Heart left ventricle (tissue), 16 donors: ENCODE measurements at regions of chr17 and their contacts with region 1.

Region 1: DNA sequence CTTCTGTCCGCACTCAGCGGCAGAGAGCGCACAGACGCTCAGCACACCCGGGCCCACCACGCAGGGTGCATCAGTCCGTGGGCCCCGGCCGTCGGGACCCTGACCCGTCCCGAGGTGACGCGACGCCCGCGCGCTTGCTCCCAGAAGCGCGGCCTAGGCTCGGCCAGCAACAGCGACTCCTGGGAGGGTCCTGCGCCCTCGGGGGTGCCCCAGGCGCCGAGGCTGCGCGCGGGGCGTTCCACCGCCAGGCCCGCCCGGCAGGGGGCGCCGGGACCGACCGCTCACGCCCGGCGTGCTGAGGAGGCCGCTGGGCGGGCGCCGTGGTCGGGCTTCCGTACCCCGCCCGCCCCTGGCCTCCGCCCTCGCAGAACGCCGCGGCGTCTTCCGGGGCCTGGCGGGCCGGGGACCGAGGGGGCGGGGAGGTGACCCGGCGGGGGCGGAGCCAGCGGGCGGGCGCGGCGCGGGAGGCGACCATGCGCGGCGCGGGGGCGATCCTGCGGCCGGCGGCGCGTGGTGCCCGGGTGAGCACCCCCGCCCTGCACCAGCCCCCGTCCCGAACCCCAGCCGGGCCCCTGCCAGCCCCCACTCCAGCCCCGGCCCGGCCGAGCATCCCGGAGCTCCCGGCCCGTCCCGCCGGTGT is at the start of gene CISD3:
- DNase-seq: peak; percentile 89 to 95 (median 91)
- ATAC-seq: peak; percentile 73 to 89 (median 84)
- H3K4me3 ChIP-seq: peak within 1 kb of the TSS; percentile 53 to 98 (median 71)
- H3K27ac ChIP-seq: peak within 1 kb of the TSS; percentile 85 to 98 (median 92)
- H3K4me1 ChIP-seq: peaks cover 0 to 63% (median 39%) of the 10 kb centered on the region in 12 donors
- H3K27me3 ChIP-seq: no peaks in the 10 kb centered on the region
- CTCF ChIP-seq: peak in 11 of 12 donors; percentile 51 to 90 (median 78)
- POLR2A ChIP-seq: peak in 1 of 2 donors; percentile 51
- total RNA-seq, gene CISD3: 21.2 to 80.3 (median 65.4) TPM

Region 2: DNA sequence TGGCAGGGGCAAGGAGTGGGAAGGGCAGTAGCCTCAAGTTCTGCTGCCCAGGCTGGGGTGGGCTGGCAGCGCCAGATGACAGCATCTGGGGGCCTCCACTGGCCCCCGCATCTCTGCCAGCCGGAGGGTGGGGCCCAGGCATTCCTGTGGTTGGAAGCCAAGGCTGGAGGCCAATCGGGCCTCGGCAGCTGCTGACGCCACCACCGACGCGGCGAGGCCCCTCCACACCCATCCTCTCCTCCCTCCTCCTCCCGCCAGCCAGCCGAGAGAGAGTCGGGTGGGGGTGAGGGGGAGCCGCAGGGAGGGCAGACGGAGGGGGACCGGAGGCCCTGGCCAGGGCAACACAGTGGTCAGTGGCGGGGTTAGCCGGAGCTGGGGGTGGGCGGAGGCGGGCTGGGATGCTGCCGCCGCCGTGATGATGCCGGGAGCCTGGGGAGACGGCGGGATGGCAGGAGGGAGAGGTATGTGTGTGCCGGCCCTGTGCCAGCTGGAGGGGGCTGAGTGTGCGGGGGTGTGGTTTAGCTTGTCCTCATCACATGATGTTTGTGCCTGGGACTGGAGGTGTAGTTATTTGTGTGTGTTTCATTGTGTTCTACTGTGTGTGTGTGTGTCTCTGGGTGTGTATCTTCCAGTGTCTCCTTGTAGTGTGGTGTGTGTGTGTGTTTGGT is 265.1 kb before region 1 on chr17:
- intact Hi-C with region 1: loop called in 1 of 10 experiments (anchors 10 kb)
- DNase-seq: peak; percentile 91 to 94 (median 92)
- ATAC-seq: peak; percentile 77 to 89 (median 88)
- H3K4me3 ChIP-seq: peak overlapping the region in 11 of 12 donors; percentile 21 to 63 (median 50)
- H3K27ac ChIP-seq: peak overlapping the region; percentile 87 to 99 (median 95)
- H3K4me1 ChIP-seq: peaks cover 5 to 94% (median 59%) of the 10 kb centered on the region in 12 donors
- H3K27me3 ChIP-seq: no peaks in the 10 kb centered on the region
- CTCF ChIP-seq: no peak
- POLR2A ChIP-seq: no peak

Region 3: GRCh38 chr17:38674749-38675615 is 55.0 kb before region 1 on chr17 and contains the start of gene EPOP:
- intact Hi-C with region 1: loop called (anchors 1 to 5 kb)
- DNase-seq: peak; percentile 85 to 93 (median 91)
- ATAC-seq: peak; percentile 79 to 93 (median 92)
- H3K4me3 ChIP-seq: peak within 1 kb of the TSS; percentile 46 to 79 (median 62)
- H3K27ac ChIP-seq: peak within 1 kb of the TSS in 1 of 12 donors; percentile 42
- H3K4me1 ChIP-seq: peaks cover 4 to 42% (median 24%) of the 10 kb centered on the region in 12 donors
- H3K27me3 ChIP-seq: peaks cover 12 to 61% (median 39%) of the 10 kb centered on the region in 9 donors
- CTCF ChIP-seq: peak in 1 of 12 donors; percentile 4
- POLR2A ChIP-seq: peak in 1 of 2 donors; percentile 53
- total RNA-seq, gene EPOP: 0.25 to 1.6 (median 0.94) TPM

Region 4: GRCh38 chr17:38693700-38694329 is 36.2 kb before region 1 on chr17:
- intact Hi-C with region 1: loop called in 5 of 10 experiments (anchors 5 kb)
- DNase-seq: peak; percentile 91 to 96 (median 94)
- ATAC-seq: peak; percentile 97 to 98 (median 98)
- H3K4me3 ChIP-seq: peak overlapping the region in 3 of 12 donors; percentile 6 to 8 (median 8)
- H3K27ac ChIP-seq: peak overlapping the region; percentile 52 to 89 (median 82)
- H3K4me1 ChIP-seq: peaks cover 0 to 20% (median 15%) of the 10 kb centered on the region in 12 donors
- H3K27me3 ChIP-seq: no peaks in the 10 kb centered on the region
- CTCF ChIP-seq: peak in 1 of 12 donors; percentile 27
- POLR2A ChIP-seq: no peak

Region 5: DNA sequence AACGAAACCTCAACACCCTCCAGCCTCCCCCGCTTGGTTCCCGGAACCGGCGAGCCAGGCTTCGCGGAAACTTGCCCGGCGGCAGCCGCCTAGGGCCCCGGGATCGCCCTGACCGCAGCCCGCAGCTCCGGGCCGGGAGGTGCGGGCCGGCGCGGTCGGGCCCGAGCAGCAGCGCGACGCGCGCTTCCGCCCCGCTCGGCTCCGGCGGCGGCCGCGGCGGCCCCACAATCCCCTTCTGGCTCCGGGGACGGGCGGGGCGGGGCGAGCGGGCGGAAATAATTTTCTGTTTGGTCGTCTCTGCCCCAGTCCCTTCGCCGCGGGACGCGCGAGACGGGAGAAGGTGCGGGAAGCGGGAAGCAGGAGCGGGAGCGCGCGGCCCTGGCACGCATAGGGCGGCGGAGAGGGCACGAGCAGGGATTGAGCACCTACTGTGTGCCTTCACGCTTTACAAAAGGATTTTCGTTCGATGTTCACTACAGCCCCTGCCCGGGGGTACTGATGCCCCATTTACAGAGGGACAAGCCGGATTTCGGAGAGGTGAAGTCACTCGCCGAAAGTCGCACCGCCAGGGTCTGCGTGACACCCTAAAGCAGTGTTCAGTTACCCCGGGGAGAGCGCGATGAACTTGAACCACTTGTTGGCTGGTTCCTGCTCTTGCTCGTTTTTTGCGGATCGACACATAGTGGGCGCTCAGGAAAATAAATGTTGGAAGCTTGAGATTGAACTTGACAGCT is 27.7 kb before region 1 on chr17:
- intact Hi-C with region 1: loop called in 3 of 10 experiments (anchors 1 to 2 kb)
- DNase-seq: peak; percentile 87 to 93 (median 92)
- ATAC-seq: peak; percentile 43 to 76 (median 68)
- H3K4me3 ChIP-seq: peak overlapping the region; percentile 45 to 97 (median 87)
- H3K27ac ChIP-seq: peak overlapping the region; percentile 82 to 99 (median 97)
- H3K4me1 ChIP-seq: peaks cover 4 to 62% (median 27%) of the 10 kb centered on the region in 12 donors
- H3K27me3 ChIP-seq: no peaks in the 10 kb centered on the region
- CTCF ChIP-seq: no peak
- POLR2A ChIP-seq: peak in 1 of 2 donors; percentile 85

Region 6: GRCh38 chr17:38752119-38752929 is 22.3 kb after region 1 on chr17 and contains the start of gene PSMB3:
- intact Hi-C with region 1: loop called in 4 of 10 experiments (anchors 1 to 2 kb)
- DNase-seq: peak; percentile 96 to 99 (median 98)
- ATAC-seq: peak; percentile 76 to 93 (median 88)
- H3K4me3 ChIP-seq: peak within 1 kb of the TSS; percentile 61 to 99 (median 94)
- H3K27ac ChIP-seq: peak within 1 kb of the TSS; percentile 37 to 99 (median 96)
- H3K4me1 ChIP-seq: peaks cover 0 to 62% (median 38%) of the 10 kb centered on the region in 12 donors
- H3K27me3 ChIP-seq: peaks cover 0 to 24% (median 0%) of the 10 kb centered on the region in 9 donors
- CTCF ChIP-seq: no peak
- POLR2A ChIP-seq: peak in 1 of 2 donors; percentile 51
- total RNA-seq, gene PSMB3: 145 to 305 (median 194) TPM

Region 7: GRCh38 chr17:38799378-38800236 is 69.6 kb after region 1 on chr17 and contains the start of gene PIP4K2B:
- intact Hi-C with region 1: no loop called
- DNase-seq: peak; percentile 96 to 98 (median 96)
- ATAC-seq: peak; percentile 93 to 97 (median 96)
- H3K4me3 ChIP-seq: peak within 1 kb of the TSS; percentile 65 to 98 (median 82)
- H3K27ac ChIP-seq: peak within 1 kb of the TSS; percentile 89 to 100 (median 99)
- H3K4me1 ChIP-seq: peaks cover 6 to 42% (median 27%) of the 10 kb centered on the region in 12 donors
- H3K27me3 ChIP-seq: no peaks in the 10 kb centered on the region
- CTCF ChIP-seq: no peak
- POLR2A ChIP-seq: peak in 1 of 2 donors; percentile 57
- total RNA-seq, gene PIP4K2B: 39.4 to 55.0 (median 48.5) TPM

Region 8: DNA sequence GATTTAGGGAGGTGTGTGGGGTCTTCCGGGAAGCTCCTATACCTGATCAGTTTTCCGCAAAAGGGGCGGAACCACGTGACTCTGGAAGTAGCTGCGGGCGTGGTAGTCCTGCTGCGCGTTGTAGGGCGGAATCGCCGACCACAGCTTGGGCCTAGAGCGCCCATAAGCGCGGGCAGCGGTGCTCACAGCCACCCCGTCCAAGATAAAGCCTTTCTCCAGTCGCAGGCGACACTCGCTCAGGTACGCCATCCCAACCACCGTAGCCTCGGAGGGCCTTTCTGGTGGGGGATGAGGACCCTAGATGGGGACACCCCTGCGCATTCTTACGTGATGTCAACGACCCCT is 111.1 kb after region 1 on chr17:
- intact Hi-C with region 1: no loop called
- DNase-seq: peak in 1 of 5 donors; percentile 39
- ATAC-seq: peak in 1 of 4 donors; percentile 50
- H3K4me3 ChIP-seq: peak overlapping the region in 7 of 12 donors; percentile 5 to 51 (median 28)
- H3K27ac ChIP-seq: no peak overlapping the region
- H3K4me1 ChIP-seq: no peaks in the 10 kb centered on the region
- H3K27me3 ChIP-seq: no peaks in the 10 kb centered on the region
- CTCF ChIP-seq: no peak
- POLR2A ChIP-seq: no peak